HEK293 (cell line): ENCODE measurements at regions of chr12 and their contacts with region 1.

Region 1: DNA sequence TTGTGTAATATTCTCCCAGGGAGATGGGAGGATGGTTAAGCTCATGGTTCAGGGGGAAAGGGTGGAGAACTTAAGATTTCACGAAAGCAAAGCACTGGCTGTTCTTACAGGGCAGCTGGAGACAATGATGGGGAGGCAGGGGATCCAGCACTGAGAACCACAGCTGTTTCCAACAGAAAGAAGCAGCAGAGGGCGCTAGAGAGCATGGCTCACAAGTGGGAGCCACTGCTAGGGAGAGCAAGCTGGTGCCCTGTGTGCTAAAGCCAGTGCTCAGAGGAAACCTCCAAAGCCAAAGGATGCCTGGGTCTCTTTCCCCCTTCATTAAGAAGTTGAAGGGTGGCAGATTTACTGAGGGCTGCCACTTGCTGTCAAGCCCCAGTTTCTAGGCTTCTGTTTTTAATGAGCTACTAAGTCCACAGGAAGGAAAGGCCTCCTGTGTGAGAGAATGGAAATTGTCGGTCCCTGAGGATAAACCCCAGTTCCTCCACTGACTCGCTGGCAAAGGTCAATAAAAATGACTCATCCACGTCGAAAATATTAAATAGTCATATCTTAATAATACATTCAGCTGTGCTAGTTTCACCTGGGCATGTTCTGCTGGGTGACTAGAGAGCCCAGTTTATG is 199.7 kb downstream of the ANO2 start:
- H3K4me3 ChIP-seq: no peak overlapping the region
- H3K27ac ChIP-seq: no peak overlapping the region
- H3K4me1 ChIP-seq: no peaks in the 10 kb centered on the region
- CTCF ChIP-seq: peak; percentile 46

Region 2: DNA sequence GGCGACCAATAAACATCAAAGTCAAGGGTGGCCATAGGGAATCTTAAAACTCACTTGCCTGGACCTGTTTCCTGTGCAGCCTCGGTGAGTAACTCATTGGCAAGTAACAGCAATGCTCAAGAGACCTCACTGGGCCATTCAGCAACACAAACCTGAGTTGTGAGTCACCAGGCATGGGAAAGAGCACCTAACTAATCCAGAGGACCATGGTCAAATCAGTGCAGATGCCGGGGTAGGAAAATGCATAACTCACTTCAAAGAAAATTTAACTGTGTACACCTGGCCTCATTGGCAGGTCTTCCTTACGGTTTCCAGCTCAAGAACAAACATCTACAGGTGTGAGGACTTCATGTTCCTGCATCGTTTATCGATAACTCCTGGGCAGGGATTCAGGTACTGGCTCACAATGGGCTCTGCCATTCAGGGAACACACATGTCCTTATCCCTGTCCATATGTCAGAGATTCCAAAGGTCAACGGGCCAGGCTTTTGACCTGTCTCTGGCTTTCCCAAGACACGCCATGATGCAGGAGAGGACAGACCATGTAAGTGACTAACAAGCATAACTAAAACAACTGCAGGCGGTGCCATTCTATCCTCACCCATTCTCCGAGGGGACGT is 12.1 kb before region 1 on chr12:
- CTCF ChIA-PET with region 1: interaction called, 19 read pairs
- POLR2A ChIA-PET with region 1: no interaction called
- H3K4me3 ChIP-seq: no peak overlapping the region
- H3K27ac ChIP-seq: no peak overlapping the region
- H3K4me1 ChIP-seq: no peaks in the 10 kb centered on the region
- CTCF ChIP-seq: no peak

Region 3: DNA sequence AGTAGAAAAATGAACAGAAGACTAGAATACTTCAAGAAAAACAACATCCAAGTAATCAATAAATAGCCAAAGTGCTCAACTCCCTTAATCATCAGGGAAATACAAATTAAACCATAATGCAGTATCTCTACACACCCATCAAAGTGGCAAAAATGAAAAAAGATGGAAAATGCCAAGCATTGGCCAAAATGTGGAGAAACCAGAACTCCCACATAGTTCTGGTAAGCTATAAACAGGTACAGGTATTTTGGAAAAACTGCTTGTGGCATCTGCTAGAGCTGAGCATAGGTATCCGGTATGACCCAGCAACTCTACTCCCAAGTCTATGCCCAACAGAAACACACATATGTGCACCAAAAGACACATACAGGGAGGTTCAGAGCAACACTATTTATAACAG is 20.5 kb after region 1 on chr12:
- CTCF ChIA-PET with region 1: interaction called, 22 read pairs
- POLR2A ChIA-PET with region 1: no interaction called
- H3K4me3 ChIP-seq: no peak overlapping the region
- H3K27ac ChIP-seq: no peak overlapping the region
- H3K4me1 ChIP-seq: no peaks in the 10 kb centered on the region
- CTCF ChIP-seq: no peak

Region 4: GRCh38 chr12:5796171-5796958 is 51.0 kb after region 1 on chr12:
- CTCF ChIA-PET with region 1: interaction called, 78 read pairs
- POLR2A ChIA-PET with region 1: interaction called, 6 read pairs
- H3K4me3 ChIP-seq: no peak overlapping the region
- H3K27ac ChIP-seq: no peak overlapping the region
- H3K4me1 ChIP-seq: no peaks in the 10 kb centered on the region
- CTCF ChIP-seq: peak; percentile 84

Region 5: GRCh38 chr12:6039894-6040568 is 294.7 kb after region 1 on chr12:
- CTCF ChIA-PET with region 1: interaction called, 14 read pairs
- POLR2A ChIA-PET with region 1: no interaction called
- H3K4me3 ChIP-seq: no peak overlapping the region
- H3K27ac ChIP-seq: no peak overlapping the region
- H3K4me1 ChIP-seq: no peaks in the 10 kb centered on the region
- CTCF ChIP-seq: peak; percentile 81